ENCODE measurements at regions of chr1 and their contacts with region 1.

Region 1: GRCh38 chr1:112390775-112391602 is 5.0 kb upstream of the CTTNBP2NL start:
- DNase-seq: peak; percentile 72 to 79 (median 78)
- H3K4me3 ChIP-seq: no peak overlapping the region
- H3K4me3 Mint-ChIP-seq: peak overlapping the region in 5 of 8 donors; percentile 1 to 71 (median 40)
- H3K27ac ChIP-seq: no peak overlapping the region
- H3K27ac Mint-ChIP-seq: peak overlapping the region in 1 of 7 donors; percentile 9
- H3K4me1 ChIP-seq: peaks cover 13% of the 10 kb centered on the region
- H3K4me1 Mint-ChIP-seq: peaks cover 9 to 15% (median 10%) of the 10 kb centered on the region in 4 donors
- H3K27me3 ChIP-seq: peaks cover 4% of the 10 kb centered on the region
- H3K27me3 Mint-ChIP-seq: peaks cover 12 to 24% of the 10 kb centered on the region in 2 donors

Region 2: DNA sequence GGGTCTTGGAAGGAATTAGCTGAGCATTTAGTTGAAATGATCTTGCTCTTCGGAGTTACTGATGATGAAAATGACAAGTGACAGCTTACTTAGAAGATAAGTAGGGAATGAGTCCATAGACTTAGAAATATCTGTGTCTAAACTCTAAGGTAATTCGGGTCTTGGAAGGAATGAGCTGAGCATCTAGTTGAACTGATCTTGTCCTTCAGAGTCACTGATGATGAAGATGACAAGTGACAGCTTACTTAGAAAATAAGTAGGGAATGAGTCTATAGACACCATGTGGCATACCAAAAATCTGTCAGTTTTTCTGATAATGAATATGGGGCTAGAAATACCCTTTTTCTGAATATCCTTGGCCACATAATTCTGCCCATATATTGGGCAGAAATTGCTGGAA is 19.7 kb after region 1 on chr1:
- CTCF ChIA-PET with region 1: interaction called, 13 read pairs
- POLR2A ChIA-PET with region 1: no interaction called
- intact Hi-C with region 1: no loop called
- DNase-seq: no peak
- H3K4me3 ChIP-seq: no peak overlapping the region
- H3K4me3 Mint-ChIP-seq: no peak overlapping the region
- H3K27ac ChIP-seq: no peak overlapping the region
- H3K27ac Mint-ChIP-seq: no peak overlapping the region
- H3K4me1 ChIP-seq: no peaks in the 10 kb centered on the region
- H3K4me1 Mint-ChIP-seq: no peaks in the 10 kb centered on the region
- H3K27me3 ChIP-seq: no peaks in the 10 kb centered on the region
- H3K27me3 Mint-ChIP-seq: peaks cover 0 to 4% of the 10 kb centered on the region in 2 donors

Region 3: DNA sequence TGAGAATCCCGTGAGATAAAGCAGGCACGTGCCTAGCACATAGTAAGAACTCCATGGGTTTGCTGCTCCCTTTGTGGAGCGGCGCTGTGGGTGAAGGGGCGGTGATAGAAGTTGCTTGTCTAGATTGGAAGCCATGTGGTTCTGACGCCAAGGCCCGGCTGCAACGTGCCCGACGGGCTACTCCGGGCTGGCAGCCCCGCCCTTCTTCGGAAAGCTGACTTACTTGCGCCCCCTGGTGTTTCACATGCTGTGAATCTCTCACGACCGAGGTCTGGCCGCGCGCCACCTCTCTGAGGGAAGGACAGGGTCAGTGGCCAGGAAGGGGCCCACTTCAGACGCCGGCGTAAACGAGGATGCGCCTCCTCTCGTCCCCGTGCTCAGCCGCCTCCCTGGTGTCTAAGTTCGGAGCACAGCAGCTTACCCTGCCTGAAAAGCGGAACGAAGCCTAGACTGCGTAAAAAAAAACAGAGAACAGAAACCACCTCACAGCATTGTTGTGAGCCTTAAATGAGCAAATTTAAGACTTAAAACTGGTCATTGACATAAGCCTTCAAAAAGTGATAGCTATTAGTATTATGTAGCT is 75.2 kb after region 1 on chr1:
- CTCF ChIA-PET with region 1: interaction called, 203 read pairs
- POLR2A ChIA-PET with region 1: interaction called, 3 read pairs
- intact Hi-C with region 1: loop called (anchors 1 kb)
- DNase-seq: peak; percentile 79 to 82 (median 80)
- H3K4me3 ChIP-seq: peak overlapping the region in 1 of 2 donors; percentile 43
- H3K4me3 Mint-ChIP-seq: peak overlapping the region; percentile 74 to 91 (median 84)
- H3K27ac ChIP-seq: no peak overlapping the region
- H3K27ac Mint-ChIP-seq: peak overlapping the region in 5 of 7 donors; percentile 16 to 85 (median 51)
- H3K4me1 ChIP-seq: peaks cover 10% of the 10 kb centered on the region
- H3K4me1 Mint-ChIP-seq: peaks cover 4 to 12% (median 9%) of the 10 kb centered on the region in 4 donors
- H3K27me3 ChIP-seq: no peaks in the 10 kb centered on the region
- H3K27me3 Mint-ChIP-seq: peaks cover 8 to 10% of the 10 kb centered on the region in 2 donors

Region 4: GRCh38 chr1:112544011-112544688 is 153.2 kb after region 1 on chr1:
- CTCF ChIA-PET with region 1: no interaction called
- POLR2A ChIA-PET with region 1: no interaction called
- intact Hi-C with region 1: no loop called
- DNase-seq: no peak
- H3K4me3 ChIP-seq: no peak overlapping the region
- H3K4me3 Mint-ChIP-seq: no peak overlapping the region
- H3K27ac ChIP-seq: no peak overlapping the region
- H3K27ac Mint-ChIP-seq: no peak overlapping the region
- H3K4me1 ChIP-seq: no peaks in the 10 kb centered on the region
- H3K4me1 Mint-ChIP-seq: no peaks in the 10 kb centered on the region
- H3K27me3 ChIP-seq: no peaks in the 10 kb centered on the region
- H3K27me3 Mint-ChIP-seq: no peaks in the 10 kb centered on the region

Region 5: DNA sequence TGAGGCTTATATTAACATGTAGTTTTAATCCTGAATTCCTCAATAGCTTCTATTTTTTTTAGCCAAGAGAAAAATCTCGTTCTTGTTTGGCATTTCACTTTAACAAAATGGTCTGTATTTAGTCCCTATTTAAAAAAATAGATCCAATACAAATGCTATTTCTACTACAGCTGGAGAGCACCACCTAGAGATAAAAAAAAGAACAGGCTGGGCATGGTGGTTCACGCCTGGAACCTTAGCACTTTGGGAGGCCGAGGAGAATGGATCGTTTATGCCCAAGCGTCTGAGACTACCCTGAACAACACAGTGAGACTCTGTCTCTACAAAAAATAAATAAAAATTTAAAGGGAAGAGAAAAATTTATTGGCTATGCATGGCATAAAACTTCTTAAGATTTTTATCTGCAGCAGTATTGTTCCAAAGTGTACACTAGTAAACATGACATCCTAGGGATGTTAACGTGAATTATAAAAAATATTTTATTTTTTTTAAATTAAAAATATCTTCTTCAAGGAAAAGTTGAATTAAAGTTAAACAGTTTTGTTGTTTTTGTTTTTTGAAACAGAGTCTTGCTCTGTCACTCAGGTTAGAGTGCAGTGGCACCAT is 223.6 kb after region 1 on chr1:
- CTCF ChIA-PET with region 1: interaction called, 11 read pairs
- POLR2A ChIA-PET with region 1: interaction called, 7 read pairs
- intact Hi-C with region 1: loop called (anchors 2 kb)
- DNase-seq: peak in 4 of 5 donors; percentile 28 to 48 (median 34)
- H3K4me3 ChIP-seq: no peak overlapping the region
- H3K4me3 Mint-ChIP-seq: peak overlapping the region in 1 of 8 donors; percentile 78
- H3K27ac ChIP-seq: no peak overlapping the region
- H3K27ac Mint-ChIP-seq: peak overlapping the region in 5 of 7 donors; percentile 64 to 89 (median 86)
- H3K4me1 ChIP-seq: peaks cover 13% of the 10 kb centered on the region
- H3K4me1 Mint-ChIP-seq: peaks cover 9 to 32% (median 18%) of the 10 kb centered on the region in 4 donors
- H3K27me3 ChIP-seq: no peaks in the 10 kb centered on the region
- H3K27me3 Mint-ChIP-seq: no peaks in the 10 kb centered on the region

Region 6: GRCh38 chr1:112809253-112809684 is 418.3 kb after region 1 on chr1:
- CTCF ChIA-PET with region 1: interaction called, 3 read pairs
- POLR2A ChIA-PET with region 1: no interaction called
- intact Hi-C with region 1: loop called (anchors 2 kb)
- DNase-seq: peak; percentile 25 to 50 (median 44)
- H3K4me3 ChIP-seq: no peak overlapping the region
- H3K4me3 Mint-ChIP-seq: no peak overlapping the region
- H3K27ac ChIP-seq: no peak overlapping the region
- H3K27ac Mint-ChIP-seq: no peak overlapping the region
- H3K4me1 ChIP-seq: no peaks in the 10 kb centered on the region
- H3K4me1 Mint-ChIP-seq: peaks cover 0 to 1% (median 0%) of the 10 kb centered on the region in 4 donors
- H3K27me3 ChIP-seq: no peaks in the 10 kb centered on the region
- H3K27me3 Mint-ChIP-seq: peaks cover 0 to 2% of the 10 kb centered on the region in 2 donors